ENCODE measurements at regions of chr15 and their contacts with region 1.

Region 1: GRCh38 chr15:54502416-54503075 is 524.3 kb downstream of the UNC13C start:
- DNase-seq: no peak
- ATAC-seq: no peak

Region 2: DNA sequence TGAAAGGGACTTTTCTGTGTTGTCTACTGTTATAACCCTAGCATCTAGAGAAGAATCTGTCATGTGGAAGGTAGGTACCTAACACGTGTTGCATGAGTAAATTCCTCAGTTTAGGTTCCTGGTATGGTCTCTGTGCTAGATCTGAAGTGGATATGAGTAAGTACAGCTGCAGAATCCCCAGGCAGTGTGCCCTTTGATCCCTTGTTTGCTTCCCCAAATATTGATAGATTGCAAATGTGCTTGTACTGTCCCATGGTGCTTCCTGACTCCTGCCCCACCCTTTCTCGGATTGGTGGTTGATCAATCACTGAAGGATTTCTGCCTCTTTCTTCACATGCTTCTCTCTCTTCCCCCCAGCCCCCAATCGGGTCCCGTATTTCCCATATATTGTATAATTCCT is 74.0 kb before region 1 on chr15:
- intact Hi-C with region 1: loop called in 1 of 2 experiments (anchors 10 kb)
- DNase-seq: no peak
- ATAC-seq: no peak

Region 3: GRCh38 chr15:54681584-54681983 is 179.0 kb after region 1 on chr15:
- intact Hi-C with region 1: no loop called
- DNase-seq: no peak
- ATAC-seq: no peak

Measured in left colon (tissue), 2 donors.